HCT116 (cell line): ENCODE measurements at regions of chr2 and their contacts with region 1.

Region 1: GRCh38 chr2:111897924-111898702 is at the start of gene MERTK:
- DNase-seq: peak; percentile 72
- ATAC-seq: peak; percentile 86
- H3K4me3 ChIP-seq: peak within 1 kb of the TSS; percentile 74 to 79
- H3K27ac ChIP-seq: peak within 1 kb of the TSS; percentile 66
- H3K4me1 ChIP-seq: peaks cover 14 to 26% of the 10 kb centered on the region in 2 experiments
- H3K27me3 ChIP-seq: no peaks in the 10 kb centered on the region
- CTCF ChIP-seq: peak; percentile 47 to 87 (median 52); a peak in 5 of 6 replicates
- POLR2A ChIP-seq: peak; percentile 25
- RAD21 ChIP-seq: peak; percentile 88
- total RNA-seq, gene MERTK: 5.7 TPM

Region 2: GRCh38 chr2:111883661-111884591 is 14.2 kb before region 1 on chr2 and contains the start of gene ANAPC1:
- CTCF ChIA-PET with region 1: interaction called, 12 read pairs
- POLR2A ChIA-PET with region 1: no interaction called
- RAD21 ChIA-PET with region 1: no interaction called
- intact Hi-C with region 1: no loop called
- DNase-seq: peak; percentile 61
- ATAC-seq: peak; percentile 92
- H3K4me3 ChIP-seq: peak within 1 kb of the TSS; percentile 96 to 99
- H3K27ac ChIP-seq: peak within 1 kb of the TSS; percentile 97
- H3K4me1 ChIP-seq: peaks cover 0 to 5% of the 10 kb centered on the region in 2 experiments; a peak in 1 of 4 replicates
- H3K27me3 ChIP-seq: no peaks in the 10 kb centered on the region
- CTCF ChIP-seq: no peak
- POLR2A ChIP-seq: peak; percentile 94
- RAD21 ChIP-seq: no peak
- total RNA-seq, gene ANAPC1: 76.5 TPM

Region 3: DNA sequence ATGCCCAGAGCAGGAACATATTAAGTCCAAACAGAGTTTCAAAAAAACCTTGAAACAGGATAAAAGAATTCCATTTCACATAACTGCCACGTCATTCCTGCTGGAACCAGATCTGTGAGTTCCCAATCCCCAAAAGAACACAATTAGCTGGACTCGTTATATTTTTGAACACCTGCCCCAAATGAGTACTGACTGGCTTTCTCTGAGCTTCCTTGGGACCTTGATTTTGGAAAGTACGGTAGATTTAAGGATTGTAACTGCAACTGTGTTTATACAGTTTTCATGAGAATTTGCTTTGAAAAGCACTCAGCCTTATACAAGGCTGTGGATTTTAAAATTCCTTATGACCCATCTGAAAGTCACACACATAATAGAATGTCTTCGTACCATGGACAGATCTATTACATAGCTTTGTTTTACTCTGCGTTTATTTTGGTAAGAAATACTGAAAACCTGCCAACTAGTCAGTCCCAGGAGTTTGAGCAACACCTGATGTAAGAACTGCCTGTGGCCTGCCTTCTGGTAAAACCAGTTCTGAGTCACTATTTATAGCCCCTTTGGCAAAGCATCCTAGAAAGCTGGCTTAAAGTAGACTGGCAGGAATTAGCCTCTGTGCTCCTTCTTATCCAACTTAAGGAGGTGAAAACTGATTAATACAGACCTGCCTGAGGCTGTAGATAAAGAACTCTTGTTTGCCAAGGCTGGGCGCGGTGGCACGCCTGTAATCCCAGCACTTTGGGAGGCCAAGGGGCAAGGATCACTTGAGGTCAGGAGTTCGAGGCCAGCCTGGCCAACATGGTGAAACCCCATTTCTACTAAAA is 48.4 kb after region 1 on chr2:
- CTCF ChIA-PET with region 1: no interaction called
- POLR2A ChIA-PET with region 1: no interaction called
- RAD21 ChIA-PET with region 1: no interaction called
- intact Hi-C with region 1: loop called (anchors 1 kb)
- DNase-seq: peak; percentile 94
- ATAC-seq: peak; percentile 91
- H3K4me3 ChIP-seq: peak overlapping the region in 1 of 2 experiments; percentile 44
- H3K27ac ChIP-seq: peak overlapping the region; percentile 59
- H3K4me1 ChIP-seq: peaks cover 24 to 26% of the 10 kb centered on the region in 2 experiments
- H3K27me3 ChIP-seq: no peaks in the 10 kb centered on the region
- CTCF ChIP-seq: no peak
- POLR2A ChIP-seq: no peak
- RAD21 ChIP-seq: peak; percentile 49

Region 4: GRCh38 chr2:111975053-111975552 is 77.0 kb after region 1 on chr2:
- CTCF ChIA-PET with region 1: no interaction called
- POLR2A ChIA-PET with region 1: no interaction called
- RAD21 ChIA-PET with region 1: no interaction called
- intact Hi-C with region 1: loop called (anchors 1 kb)
- DNase-seq: peak; percentile 97
- ATAC-seq: peak; percentile 96
- H3K4me3 ChIP-seq: no peak overlapping the region
- H3K27ac ChIP-seq: peak overlapping the region; percentile 23; the same call in 1 of the 2 replicates
- H3K4me1 ChIP-seq: peaks cover 30 to 43% of the 10 kb centered on the region in 2 experiments
- H3K27me3 ChIP-seq: no peaks in the 10 kb centered on the region
- CTCF ChIP-seq: no peak
- POLR2A ChIP-seq: no peak
- RAD21 ChIP-seq: peak; percentile 34; the same call in 1 of the 2 replicates

Region 5: GRCh38 chr2:112054847-112055729 is 157.0 kb after region 1 on chr2 and contains the start of gene TMEM87B:
- CTCF ChIA-PET with region 1: no interaction called
- POLR2A ChIA-PET with region 1: interaction called, 13 read pairs
- RAD21 ChIA-PET with region 1: interaction called in 1 of 2 experiments, 4 read pairs
- intact Hi-C with region 1: no loop called
- DNase-seq: peak; percentile 87
- ATAC-seq: peak; percentile 74
- H3K4me3 ChIP-seq: peak within 1 kb of the TSS; percentile 62 to 89
- H3K27ac ChIP-seq: peak within 1 kb of the TSS; percentile 95
- H3K4me1 ChIP-seq: peaks cover 16 to 21% of the 10 kb centered on the region in 2 experiments
- H3K27me3 ChIP-seq: no peaks in the 10 kb centered on the region
- CTCF ChIP-seq: no peak
- POLR2A ChIP-seq: no peak
- RAD21 ChIP-seq: no peak
- total RNA-seq, gene TMEM87B: 14.8 TPM